ENCODE measurements at regions of chr16 and their contacts with region 1.

Region 1: DNA sequence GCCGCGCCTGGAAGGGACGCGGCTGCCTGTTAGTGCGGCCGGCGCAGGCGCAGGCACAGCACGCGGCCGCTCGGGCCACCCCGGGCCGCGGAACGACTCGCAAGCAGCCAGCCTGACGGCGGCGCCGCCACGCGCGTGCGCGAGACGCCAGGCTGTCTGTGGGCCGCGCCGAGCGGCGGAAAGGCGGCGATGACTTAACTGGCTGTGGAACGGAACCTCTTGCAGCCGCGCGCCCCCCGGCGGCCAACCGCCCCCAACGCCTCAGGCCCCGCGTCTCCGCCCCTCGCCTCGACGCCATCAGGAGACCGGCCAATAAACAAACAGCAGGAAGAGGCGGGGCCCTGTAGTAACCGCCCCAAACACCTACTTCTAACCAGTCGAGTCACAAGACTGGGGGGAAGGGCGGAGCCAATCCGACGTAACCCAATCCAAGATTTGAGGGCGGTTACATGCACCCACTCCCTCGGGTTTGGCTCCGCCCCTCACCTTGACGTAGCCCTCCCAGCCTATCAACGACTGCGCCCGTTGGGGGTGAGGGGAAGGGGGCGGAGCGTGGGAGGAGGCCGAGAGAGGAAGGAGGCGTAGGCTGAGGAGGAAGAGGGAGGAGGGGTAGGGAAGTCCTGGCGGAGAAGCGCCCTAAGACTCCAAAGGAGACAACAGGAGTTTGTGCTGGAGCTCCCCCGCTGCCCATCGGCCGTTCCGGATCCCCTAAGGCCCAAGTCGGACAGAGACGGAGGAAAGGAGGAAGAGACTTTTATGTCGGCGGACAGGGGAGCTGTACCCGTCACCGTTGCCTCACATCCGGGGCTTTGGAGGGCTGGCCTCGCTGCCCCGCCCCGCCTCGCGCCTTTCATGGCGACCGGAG is at the start of gene FBRS:
- DNase-seq: peak; percentile 100
- H3K4me3 Mint-ChIP-seq: peak within 1 kb of the TSS; percentile 94
- H3K27ac Mint-ChIP-seq: peak within 1 kb of the TSS; percentile 99
- H3K4me1 Mint-ChIP-seq: peaks cover 44% of the 10 kb centered on the region
- H3K27me3 Mint-ChIP-seq: no peaks in the 10 kb centered on the region
- total RNA-seq, gene FBRS: 116 and 125 TPM in 2 replicates

Region 2: DNA sequence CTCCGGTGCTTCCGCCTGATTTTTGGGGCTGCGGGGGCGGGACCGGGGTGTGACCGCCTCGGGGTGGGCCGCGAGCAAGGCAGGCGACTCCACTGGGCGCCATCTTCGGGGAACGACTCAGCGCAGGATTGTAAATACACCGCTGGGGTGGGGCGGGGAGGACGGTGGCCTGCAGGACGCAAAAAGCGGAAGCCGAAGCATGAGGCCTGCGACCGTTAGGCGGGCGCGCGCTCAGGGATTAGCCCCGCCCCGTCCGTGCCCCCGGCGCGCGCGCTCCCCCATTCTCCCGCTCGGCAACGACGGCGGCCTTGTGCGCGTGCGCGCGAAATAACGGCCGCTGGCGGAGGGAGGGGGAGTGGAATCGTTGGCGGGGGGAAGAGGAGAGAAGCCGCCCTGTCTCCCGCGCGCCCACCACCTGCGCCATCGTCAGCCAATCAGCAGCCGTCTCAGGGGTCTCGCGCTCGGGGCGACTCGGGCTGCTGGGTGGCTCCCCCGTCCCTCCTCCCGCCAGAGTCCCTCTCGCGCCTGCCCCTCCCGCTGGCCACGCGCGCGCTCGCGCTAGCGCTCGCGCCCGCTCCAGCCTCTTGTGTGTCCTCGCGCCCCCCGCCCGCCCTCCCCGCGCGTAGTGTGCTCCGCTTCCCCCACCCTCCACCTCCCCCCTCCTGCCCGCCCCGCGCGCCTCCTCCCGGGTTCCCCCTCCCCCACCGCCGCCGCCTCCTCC is 852.6 kb before region 1 on chr16:
- intact Hi-C with region 1: loop called (anchors 5 kb)
- DNase-seq: peak; percentile 97
- H3K4me3 Mint-ChIP-seq: peak overlapping the region; percentile 100
- H3K27ac Mint-ChIP-seq: peak overlapping the region; percentile 100
- H3K4me1 Mint-ChIP-seq: peaks cover 42% of the 10 kb centered on the region
- H3K27me3 Mint-ChIP-seq: no peaks in the 10 kb centered on the region

Region 3: GRCh38 chr16:30065143-30065850 is 592.8 kb before region 1 on chr16 and contains the start of gene ALDOA:
- intact Hi-C with region 1: loop called (anchors 2 kb)
- DNase-seq: peak; percentile 95
- H3K4me3 Mint-ChIP-seq: peak within 1 kb of the TSS; percentile 99
- H3K27ac Mint-ChIP-seq: peak within 1 kb of the TSS; percentile 95
- H3K4me1 Mint-ChIP-seq: peaks cover 25% of the 10 kb centered on the region
- H3K27me3 Mint-ChIP-seq: peaks cover 1% of the 10 kb centered on the region
- total RNA-seq, gene ALDOA: 1,715 and 1,718 TPM in 2 replicates

Region 4: DNA sequence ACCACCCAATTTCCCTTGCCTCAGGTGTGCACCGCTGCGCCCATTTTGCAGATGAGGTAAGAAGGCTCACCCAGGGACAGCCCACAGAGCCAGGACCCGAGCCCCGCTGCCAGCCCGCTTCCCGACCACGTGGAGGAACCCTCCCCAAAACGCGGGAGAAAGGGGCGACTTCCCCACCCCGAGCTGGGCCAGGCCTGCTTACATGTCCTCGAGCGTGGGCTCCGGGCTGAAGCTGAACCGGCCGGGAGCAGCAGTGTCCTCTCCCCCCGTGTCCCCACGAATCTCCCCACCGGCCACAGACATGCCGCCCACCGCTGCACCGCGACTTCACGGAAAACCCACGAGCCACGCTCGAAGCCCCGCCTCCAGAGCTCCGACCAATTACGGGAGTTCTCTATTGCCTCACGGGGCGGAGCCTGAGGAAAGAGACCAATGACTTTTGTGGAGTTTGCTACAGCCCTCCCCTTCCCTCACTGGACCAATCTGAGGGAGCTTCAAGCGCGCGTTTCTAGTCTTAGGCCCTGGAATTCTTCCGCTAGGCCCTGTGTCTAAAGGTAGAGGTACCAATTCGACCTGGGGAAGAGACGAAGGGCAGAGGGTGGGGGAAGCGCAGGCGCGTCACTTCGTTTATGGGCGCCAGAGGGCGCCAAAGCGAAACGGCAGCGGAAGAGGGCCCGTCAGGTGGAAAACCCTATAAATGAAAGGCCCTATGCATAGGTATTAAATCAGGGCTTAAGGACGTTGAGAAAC is 228.2 kb before region 1 on chr16 and contains the start of gene DCTPP1:
- intact Hi-C with region 1: loop called (anchors 1 kb)
- DNase-seq: peak; percentile 96
- H3K4me3 Mint-ChIP-seq: no peak within 1 kb of the TSS
- H3K27ac Mint-ChIP-seq: no peak within 1 kb of the TSS
- H3K4me1 Mint-ChIP-seq: peaks cover 31% of the 10 kb centered on the region
- H3K27me3 Mint-ChIP-seq: no peaks in the 10 kb centered on the region
- total RNA-seq, gene DCTPP1: 173 and 178 TPM in 2 replicates

Region 5: DNA sequence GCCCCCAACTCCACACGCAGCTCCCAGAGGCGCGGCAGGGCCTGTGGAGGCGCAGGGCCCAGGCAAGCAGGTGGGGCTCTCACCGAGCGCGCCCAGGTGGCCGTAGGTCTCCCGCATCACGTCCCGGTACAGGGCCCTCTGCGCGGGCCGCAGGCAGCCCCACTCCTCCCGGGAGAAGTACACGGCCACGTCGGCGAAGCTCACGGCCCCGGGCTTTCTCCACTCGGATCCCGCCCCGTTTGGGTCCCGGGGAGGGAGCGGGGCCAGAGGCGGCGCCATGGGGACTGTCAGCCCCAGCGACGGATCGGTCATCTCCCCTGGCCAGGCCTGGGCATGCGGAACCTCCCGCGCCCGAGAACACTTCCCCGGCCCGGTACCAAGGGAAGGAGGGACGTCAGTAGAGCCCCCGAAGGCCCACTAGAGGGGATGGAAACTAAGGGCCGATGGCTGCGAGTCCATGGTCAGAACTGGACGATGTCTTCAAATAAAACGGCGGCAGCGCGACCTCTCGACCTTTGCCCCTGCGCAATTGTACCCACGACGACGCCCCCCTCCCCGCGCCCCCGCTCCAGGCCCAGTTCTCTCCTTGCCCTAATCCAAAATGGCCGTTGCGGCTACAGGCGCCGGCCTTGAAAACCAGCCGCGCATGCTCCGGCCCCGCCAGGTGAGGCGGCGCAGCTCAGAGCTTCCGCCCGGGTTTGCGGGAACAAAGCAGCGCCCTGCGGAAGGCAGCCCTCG is 123.6 kb before region 1 on chr16 and contains the start of gene ZNF747:
- intact Hi-C with region 1: loop called (anchors 2 kb)
- DNase-seq: peak; percentile 88
- H3K4me3 Mint-ChIP-seq: peak within 1 kb of the TSS; percentile 98
- H3K27ac Mint-ChIP-seq: peak within 1 kb of the TSS; percentile 99
- H3K4me1 Mint-ChIP-seq: peaks cover 39% of the 10 kb centered on the region
- H3K27me3 Mint-ChIP-seq: no peaks in the 10 kb centered on the region
- total RNA-seq, gene ZNF747: 13.8 and 15.8 TPM in 2 replicates

Region 6: DNA sequence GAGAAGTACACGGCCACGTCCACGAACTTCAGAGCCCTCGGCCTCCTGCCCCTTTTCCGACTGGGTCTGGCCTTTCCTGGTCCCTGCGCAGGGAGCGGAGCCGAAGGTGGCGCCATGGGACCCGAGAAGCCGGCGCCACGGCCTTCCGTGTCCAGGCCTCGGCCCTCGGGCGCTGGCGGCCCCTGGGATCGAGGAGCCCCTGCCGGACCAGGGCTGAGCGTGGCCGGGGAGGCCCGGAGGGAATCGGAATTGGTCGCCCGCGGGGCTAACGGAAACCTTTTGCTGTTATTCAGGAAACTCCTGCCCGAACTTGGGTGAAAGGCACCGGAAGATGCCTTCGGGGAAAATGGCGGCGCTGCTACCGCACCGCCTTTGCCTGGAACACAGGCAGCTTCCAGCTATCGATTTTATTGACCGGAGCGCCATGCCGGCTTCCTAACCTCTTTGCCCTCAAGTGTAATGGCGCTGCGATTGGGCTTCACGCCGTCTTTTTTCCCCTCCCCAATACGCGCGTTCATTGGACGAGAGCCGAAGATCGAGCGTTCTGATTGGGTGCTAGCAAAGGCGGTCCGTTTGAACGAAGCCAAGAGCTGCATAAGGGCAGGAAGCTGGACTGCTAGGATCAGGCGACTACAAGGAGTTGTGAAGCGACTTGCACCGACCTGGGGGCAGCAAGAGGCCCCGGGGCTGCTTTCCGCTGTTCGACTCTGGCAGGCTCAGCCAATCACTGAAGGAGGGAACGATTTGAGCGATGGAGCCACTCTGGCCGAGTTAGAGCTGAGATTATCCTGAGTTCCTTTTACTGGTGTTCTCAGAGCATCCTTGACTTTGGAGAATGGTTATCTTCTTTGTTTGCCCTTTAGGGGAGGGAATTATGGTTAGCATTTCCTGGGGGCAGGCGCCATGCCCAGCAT is 47.9 kb before region 1 on chr16 and contains the start of gene ZNF689:
- intact Hi-C with region 1: loop called (anchors 1 kb)
- DNase-seq: peak; percentile 95
- H3K4me3 Mint-ChIP-seq: peak within 1 kb of the TSS; percentile 93
- H3K27ac Mint-ChIP-seq: peak within 1 kb of the TSS; percentile 96
- H3K4me1 Mint-ChIP-seq: peaks cover 19% of the 10 kb centered on the region
- H3K27me3 Mint-ChIP-seq: no peaks in the 10 kb centered on the region
- total RNA-seq, gene ZNF689: 14.7 TPM in 2 replicates

Region 7: GRCh38 chr16:30644334-30644830 is 13.7 kb before region 1 on chr16:
- intact Hi-C with region 1: no loop called
- DNase-seq: no peak
- H3K4me3 Mint-ChIP-seq: no peak overlapping the region
- H3K27ac Mint-ChIP-seq: no peak overlapping the region
- H3K4me1 Mint-ChIP-seq: no peaks in the 10 kb centered on the region
- H3K27me3 Mint-ChIP-seq: peaks cover 4% of the 10 kb centered on the region

Region 8: DNA sequence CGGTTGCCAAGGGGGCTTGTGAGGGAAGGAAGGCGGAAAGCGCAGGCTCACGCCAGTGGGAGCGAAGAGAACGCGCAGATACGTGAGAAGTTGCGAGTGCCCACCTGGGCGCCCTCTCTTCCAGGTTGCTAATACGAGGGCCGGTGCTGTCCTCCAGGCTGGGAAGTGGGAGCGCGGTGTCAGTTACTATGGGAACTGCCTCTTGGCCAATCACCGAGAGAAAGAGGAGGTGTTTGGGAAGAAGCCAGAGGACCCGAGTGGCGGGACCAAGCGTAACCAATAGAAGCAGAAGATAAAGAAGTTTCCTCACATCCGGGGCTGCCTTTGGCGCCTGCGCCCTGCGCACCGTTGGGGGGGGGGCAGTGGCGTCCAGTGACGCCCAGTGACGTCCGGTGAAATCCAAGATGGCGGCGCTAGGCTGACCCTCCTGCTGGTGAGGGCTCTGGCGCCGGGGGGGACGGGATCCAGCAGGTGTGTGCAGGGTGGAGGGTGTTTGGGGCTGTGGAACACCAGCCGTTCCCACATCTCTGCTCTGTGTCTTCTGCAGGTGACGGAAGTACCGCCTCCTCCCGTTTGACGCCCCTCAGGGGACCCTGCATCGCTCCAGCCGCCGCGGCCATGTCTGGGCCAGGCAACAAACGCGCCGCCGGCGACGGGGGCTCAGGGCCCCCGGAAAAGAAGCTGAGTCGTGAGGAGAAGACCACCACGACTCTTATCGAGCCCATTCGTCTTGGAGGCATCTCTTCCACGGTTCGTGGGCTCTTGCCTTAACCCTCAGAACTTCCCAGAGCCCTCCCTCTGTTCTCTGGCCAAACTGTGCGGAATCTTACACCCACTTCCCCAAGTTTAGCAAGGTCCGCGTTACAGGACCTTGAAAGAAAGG is 104.1 kb after region 1 on chr16 and contains the starts of genes CFAP119 and RNF40:
- intact Hi-C with region 1: loop called (anchors 2 kb)
- DNase-seq: peak; percentile 95
- H3K4me3 Mint-ChIP-seq: peak within 1 kb of the TSS; percentile 93
- H3K27ac Mint-ChIP-seq: peak within 1 kb of the TSS; percentile 82
- H3K4me1 Mint-ChIP-seq: peaks cover 28% of the 10 kb centered on the region
- H3K27me3 Mint-ChIP-seq: no peaks in the 10 kb centered on the region
- total RNA-seq, gene CFAP119: 4.4 and 5.6 TPM in 2 replicates
- total RNA-seq, gene RNF40: 98.2 and 98.5 TPM in 2 replicates

Region 9: GRCh38 chr16:30984669-30985400 is 326.7 kb after region 1 on chr16 and contains the start of gene HSD3B7:
- intact Hi-C with region 1: no loop called
- DNase-seq: peak; percentile 73
- H3K4me3 Mint-ChIP-seq: peak within 1 kb of the TSS; percentile 7
- H3K27ac Mint-ChIP-seq: no peak within 1 kb of the TSS
- H3K4me1 Mint-ChIP-seq: no peaks in the 10 kb centered on the region
- H3K27me3 Mint-ChIP-seq: no peaks in the 10 kb centered on the region
- total RNA-seq, gene HSD3B7: 2.1 and 3.3 TPM in 2 replicates